ENCODE measurements at regions of chrX and their contacts with region 1.

Region 1: GRCh38 chrX:70664726-70665125 is 220.1 kb downstream of the DLG3 start:
- DNase-seq: peak; percentile 50
- H3K4me3 Mint-ChIP-seq: no peak overlapping the region
- H3K27ac Mint-ChIP-seq: no peak overlapping the region
- H3K4me1 Mint-ChIP-seq: no peaks in the 10 kb centered on the region
- H3K27me3 Mint-ChIP-seq: peaks cover 74% of the 10 kb centered on the region
- CTCF ChIP-seq: peak; percentile 50

Region 2: GRCh38 chrX:70196961-70197805 is 467.5 kb before region 1 on chrX:
- CTCF ChIA-PET with region 1: no interaction called
- POLR2A ChIA-PET with region 1: no interaction called
- intact Hi-C with region 1: loop called (anchors 1 kb)
- DNase-seq: peak; percentile 76
- H3K4me3 Mint-ChIP-seq: no peak overlapping the region
- H3K27ac Mint-ChIP-seq: no peak overlapping the region
- H3K4me1 Mint-ChIP-seq: peaks cover 5% of the 10 kb centered on the region
- H3K27me3 Mint-ChIP-seq: peaks cover 48% of the 10 kb centered on the region
- CTCF ChIP-seq: peak; percentile 45

Region 3: GRCh38 chrX:70422851-70423341 is 241.8 kb before region 1 on chrX and contains the start of gene GDPD2:
- CTCF ChIA-PET with region 1: interaction called, 5 read pairs
- POLR2A ChIA-PET with region 1: no interaction called
- intact Hi-C with region 1: loop called (anchors 1 kb)
- DNase-seq: peak; percentile 25
- H3K4me3 Mint-ChIP-seq: no peak within 1 kb of the TSS
- H3K27ac Mint-ChIP-seq: no peak within 1 kb of the TSS
- H3K4me1 Mint-ChIP-seq: peaks cover 6% of the 10 kb centered on the region
- H3K27me3 Mint-ChIP-seq: peaks cover 22% of the 10 kb centered on the region
- CTCF ChIP-seq: no peak
- total RNA-seq, gene GDPD2: not detected in 2 replicates

Region 4: GRCh38 chrX:70554081-70554480 is 110.6 kb before region 1 on chrX:
- CTCF ChIA-PET with region 1: no interaction called
- POLR2A ChIA-PET with region 1: no interaction called
- intact Hi-C with region 1: loop called (anchors 1 kb)
- DNase-seq: peak; percentile 42
- H3K4me3 Mint-ChIP-seq: no peak overlapping the region
- H3K27ac Mint-ChIP-seq: no peak overlapping the region
- H3K4me1 Mint-ChIP-seq: peaks cover 6% of the 10 kb centered on the region
- H3K27me3 Mint-ChIP-seq: peaks cover 42% of the 10 kb centered on the region
- CTCF ChIP-seq: no peak

Region 5: DNA sequence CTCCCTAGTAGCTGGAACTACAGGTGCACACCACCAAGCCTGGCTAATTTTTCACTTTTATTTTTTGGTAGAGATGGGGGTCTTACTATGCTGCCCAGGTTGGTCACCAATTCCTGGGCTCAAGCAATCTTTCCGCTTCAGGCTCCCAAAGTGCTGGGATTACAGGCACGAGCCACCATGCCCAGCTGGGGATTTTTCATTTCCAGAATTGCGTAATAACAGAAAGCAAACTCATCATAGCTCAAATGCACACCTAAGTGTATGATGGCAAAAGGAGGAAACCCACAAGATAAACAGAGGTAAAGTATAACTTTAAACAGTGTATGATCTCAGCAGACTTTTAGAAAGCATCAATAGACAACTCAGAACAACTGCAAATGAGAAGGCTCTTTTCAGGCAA is 187.6 kb after region 1 on chrX:
- CTCF ChIA-PET with region 1: no interaction called
- POLR2A ChIA-PET with region 1: no interaction called
- intact Hi-C with region 1: no loop called
- DNase-seq: peak; percentile 13
- H3K4me3 Mint-ChIP-seq: no peak overlapping the region
- H3K27ac Mint-ChIP-seq: no peak overlapping the region
- H3K4me1 Mint-ChIP-seq: no peaks in the 10 kb centered on the region
- H3K27me3 Mint-ChIP-seq: peaks cover 29% of the 10 kb centered on the region
- CTCF ChIP-seq: no peak

Region 6: GRCh38 chrX:71941776-71942175 is 1277.0 kb after region 1 on chrX:
- CTCF ChIA-PET with region 1: no interaction called
- POLR2A ChIA-PET with region 1: no interaction called
- intact Hi-C with region 1: no loop called
- DNase-seq: peak; percentile 37
- H3K4me3 Mint-ChIP-seq: no peak overlapping the region
- H3K27ac Mint-ChIP-seq: no peak overlapping the region
- H3K4me1 Mint-ChIP-seq: no peaks in the 10 kb centered on the region
- H3K27me3 Mint-ChIP-seq: peaks cover 52% of the 10 kb centered on the region
- CTCF ChIP-seq: no peak

Measured in MCF 10A (cell line).